ENCODE measurements at regions of chr10 and their contacts with region 1.

Region 1: GRCh38 chr10:78236416-78237015 is 202.9 kb downstream of the RPS24 start:
- DNase-seq: no peak
- H3K4me3 ChIP-seq: no peak overlapping the region
- H3K27ac ChIP-seq: no peak overlapping the region
- H3K4me1 ChIP-seq: no peaks in the 10 kb centered on the region
- H3K27me3 ChIP-seq: no peaks in the 10 kb centered on the region
- CTCF ChIP-seq: no peak
- EP300 ChIP-seq: no peak
- POLR2A ChIP-seq: no peak

Region 2: DNA sequence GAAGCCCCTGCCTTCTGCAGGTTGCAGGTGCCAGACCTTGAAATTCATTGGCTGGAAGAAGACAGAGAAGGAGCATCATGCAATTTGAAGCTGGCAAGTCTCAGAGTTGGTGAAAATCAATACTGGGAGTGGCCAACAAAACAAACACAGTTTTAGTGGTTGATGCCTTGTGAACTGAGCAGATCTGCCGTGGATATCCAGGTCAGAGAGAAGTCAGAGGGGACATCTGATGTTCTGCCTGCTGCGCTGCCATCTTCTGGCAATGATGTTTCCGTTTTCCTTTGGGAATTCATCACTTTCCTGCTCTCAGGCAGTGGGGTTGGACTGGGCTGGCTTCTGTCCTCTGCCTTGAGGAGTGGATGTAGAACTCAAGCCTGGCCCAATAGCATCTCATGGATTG is 70.9 kb before region 1 on chr10:
- intact Hi-C with region 1: no loop called
- DNase-seq: no peak
- H3K4me3 ChIP-seq: no peak overlapping the region
- H3K27ac ChIP-seq: no peak overlapping the region
- H3K4me1 ChIP-seq: no peaks in the 10 kb centered on the region
- H3K27me3 ChIP-seq: no peaks in the 10 kb centered on the region
- CTCF ChIP-seq: no peak
- EP300 ChIP-seq: no peak
- POLR2A ChIP-seq: no peak

Region 3: DNA sequence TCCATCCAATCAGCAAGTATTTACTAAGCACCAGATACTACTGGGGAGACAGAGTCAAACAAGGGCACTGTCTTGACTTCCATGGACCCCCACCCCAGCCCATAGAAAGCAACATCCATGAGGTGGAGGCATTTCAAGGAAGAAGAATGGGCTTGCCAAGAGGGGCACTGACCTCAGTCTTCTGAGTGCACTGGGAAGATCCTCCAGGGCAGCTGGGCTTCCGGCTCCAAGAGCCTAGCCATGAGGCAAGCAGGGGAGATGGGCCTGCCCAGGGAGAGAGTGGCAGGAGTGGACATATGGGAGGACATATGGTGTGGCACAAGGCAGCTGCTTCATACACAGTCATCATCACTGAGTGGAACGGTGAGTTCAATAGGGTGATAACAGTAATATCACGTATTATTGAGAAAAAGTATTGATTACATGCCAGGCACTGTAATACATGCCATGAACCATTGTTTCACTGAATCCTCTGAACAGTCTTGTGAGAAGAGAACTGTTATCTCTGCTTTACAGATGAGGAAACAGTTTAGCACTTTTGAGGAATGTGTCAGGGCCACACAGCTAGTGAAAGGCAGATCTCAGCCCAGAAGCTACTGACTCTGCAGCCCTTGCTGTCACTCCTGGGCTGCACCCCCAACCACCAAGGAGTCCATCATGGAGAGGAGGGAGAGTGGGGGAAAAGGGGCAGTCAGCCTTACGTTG is 500.6 kb after region 1 on chr10:
- intact Hi-C with region 1: loop called in 1 of 4 experiments (anchors 1 kb)
- DNase-seq: no peak
- H3K4me3 ChIP-seq: no peak overlapping the region
- H3K27ac ChIP-seq: no peak overlapping the region
- H3K4me1 ChIP-seq: peaks cover 1% of the 10 kb centered on the region
- H3K27me3 ChIP-seq: no peaks in the 10 kb centered on the region
- CTCF ChIP-seq: no peak
- EP300 ChIP-seq: no peak
- POLR2A ChIP-seq: no peak

Measured in ovary (tissue), 10 donors.